ENCODE measurements at regions of chr10 and their contacts with region 1.

Region 1: DNA sequence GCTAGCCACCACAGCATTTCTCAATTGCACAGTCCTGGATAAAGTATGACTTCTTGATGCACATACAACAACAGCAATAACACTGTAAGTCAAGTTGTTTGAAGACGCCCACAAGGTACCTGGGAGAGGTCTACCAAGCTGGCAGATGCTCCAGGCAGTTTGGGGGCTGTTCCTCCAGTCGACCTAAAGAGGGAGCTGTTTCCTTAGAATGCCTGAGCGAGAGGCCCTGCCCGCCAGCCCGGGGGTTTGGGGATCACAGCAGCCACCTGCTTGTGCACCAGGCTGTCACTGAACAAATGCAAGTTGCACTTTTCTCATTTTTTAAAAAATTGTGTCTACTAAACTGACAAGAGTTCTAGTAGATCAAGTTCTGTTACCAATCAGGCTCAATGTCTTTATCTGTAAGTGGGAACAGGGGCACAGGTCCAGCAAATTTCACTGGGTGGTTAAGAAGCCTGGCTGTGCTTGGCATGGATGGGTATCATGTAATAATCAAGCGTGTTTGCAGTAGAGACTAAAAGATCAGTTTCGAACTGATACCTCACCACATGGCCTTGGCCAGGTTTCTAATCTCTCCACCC is 193.8 kb upstream of the ADO start:
- DNase-seq: peak; percentile 87
- ATAC-seq: peak; percentile 97
- H3K4me3 ChIP-seq: no peak overlapping the region
- H3K4me3 Mint-ChIP-seq: no peak overlapping the region
- H3K27ac ChIP-seq: no peak overlapping the region
- H3K27ac Mint-ChIP-seq: no peak overlapping the region
- H3K4me1 ChIP-seq: peaks cover 5% of the 10 kb centered on the region in 2 donors
- H3K4me1 Mint-ChIP-seq: peaks cover 12% of the 10 kb centered on the region
- H3K27me3 ChIP-seq: no peaks in the 10 kb centered on the region
- H3K27me3 Mint-ChIP-seq: no peaks in the 10 kb centered on the region
- CTCF ChIP-seq: peak; percentile 86

Region 2: DNA sequence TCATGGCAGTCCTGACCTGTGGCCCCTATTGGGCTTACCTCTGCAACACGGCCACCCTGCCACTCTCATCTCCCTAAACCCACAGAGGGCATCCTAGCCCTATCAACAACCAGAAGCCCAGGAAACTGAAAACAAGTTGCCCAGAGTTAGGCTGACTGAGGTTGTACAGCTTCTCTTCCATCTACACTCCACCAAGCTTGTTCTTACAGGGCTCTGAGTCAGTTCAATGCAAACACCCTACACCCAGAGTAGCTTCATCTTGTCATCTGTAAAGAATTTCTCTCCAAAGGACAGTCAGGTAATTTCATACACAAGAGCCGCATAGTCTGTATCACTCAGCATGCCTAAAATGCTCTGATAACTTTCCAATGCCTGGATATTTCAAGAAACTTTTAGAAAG is 533.8 kb before region 1 on chr10:
- CTCF ChIA-PET with region 1: no interaction called
- POLR2A ChIA-PET with region 1: no interaction called
- intact Hi-C with region 1: no loop called
- DNase-seq: no peak
- ATAC-seq: no peak
- H3K4me3 ChIP-seq: no peak overlapping the region
- H3K4me3 Mint-ChIP-seq: no peak overlapping the region
- H3K27ac ChIP-seq: peak overlapping the region; percentile 46 to 49
- H3K27ac Mint-ChIP-seq: peak overlapping the region; percentile 22
- H3K4me1 ChIP-seq: peaks cover 51 to 52% of the 10 kb centered on the region in 2 donors
- H3K4me1 Mint-ChIP-seq: peaks cover 81% of the 10 kb centered on the region
- H3K27me3 ChIP-seq: no peaks in the 10 kb centered on the region
- H3K27me3 Mint-ChIP-seq: no peaks in the 10 kb centered on the region
- CTCF ChIP-seq: no peak

Region 3: GRCh38 chr10:62512732-62513475 is 97.8 kb before region 1 on chr10:
- CTCF ChIA-PET with region 1: no interaction called
- POLR2A ChIA-PET with region 1: no interaction called
- intact Hi-C with region 1: no loop called
- DNase-seq: no peak
- ATAC-seq: no peak
- H3K4me3 ChIP-seq: no peak overlapping the region
- H3K4me3 Mint-ChIP-seq: no peak overlapping the region
- H3K27ac ChIP-seq: no peak overlapping the region
- H3K27ac Mint-ChIP-seq: no peak overlapping the region
- H3K4me1 ChIP-seq: no peaks in the 10 kb centered on the region
- H3K4me1 Mint-ChIP-seq: peaks cover 9% of the 10 kb centered on the region
- H3K27me3 ChIP-seq: no peaks in the 10 kb centered on the region
- H3K27me3 Mint-ChIP-seq: peaks cover 3% of the 10 kb centered on the region
- CTCF ChIP-seq: no peak

Region 4: GRCh38 chr10:62632071-62632809 is 21.5 kb after region 1 on chr10:
- CTCF ChIA-PET with region 1: interaction called, 13 read pairs
- POLR2A ChIA-PET with region 1: no interaction called
- intact Hi-C with region 1: loop called (anchors 2 kb)
- DNase-seq: peak; percentile 84
- ATAC-seq: peak; percentile 81
- H3K4me3 ChIP-seq: peak overlapping the region in 4 of 5 experiments; percentile 31 to 56 (median 40)
- H3K4me3 Mint-ChIP-seq: peak overlapping the region; percentile 90
- H3K27ac ChIP-seq: peak overlapping the region; percentile 94 to 95
- H3K27ac Mint-ChIP-seq: peak overlapping the region; percentile 99
- H3K4me1 ChIP-seq: peaks cover 54 to 59% of the 10 kb centered on the region in 2 donors
- H3K4me1 Mint-ChIP-seq: peaks cover 54% of the 10 kb centered on the region
- H3K27me3 ChIP-seq: no peaks in the 10 kb centered on the region
- H3K27me3 Mint-ChIP-seq: no peaks in the 10 kb centered on the region
- CTCF ChIP-seq: no peak

Region 5: DNA sequence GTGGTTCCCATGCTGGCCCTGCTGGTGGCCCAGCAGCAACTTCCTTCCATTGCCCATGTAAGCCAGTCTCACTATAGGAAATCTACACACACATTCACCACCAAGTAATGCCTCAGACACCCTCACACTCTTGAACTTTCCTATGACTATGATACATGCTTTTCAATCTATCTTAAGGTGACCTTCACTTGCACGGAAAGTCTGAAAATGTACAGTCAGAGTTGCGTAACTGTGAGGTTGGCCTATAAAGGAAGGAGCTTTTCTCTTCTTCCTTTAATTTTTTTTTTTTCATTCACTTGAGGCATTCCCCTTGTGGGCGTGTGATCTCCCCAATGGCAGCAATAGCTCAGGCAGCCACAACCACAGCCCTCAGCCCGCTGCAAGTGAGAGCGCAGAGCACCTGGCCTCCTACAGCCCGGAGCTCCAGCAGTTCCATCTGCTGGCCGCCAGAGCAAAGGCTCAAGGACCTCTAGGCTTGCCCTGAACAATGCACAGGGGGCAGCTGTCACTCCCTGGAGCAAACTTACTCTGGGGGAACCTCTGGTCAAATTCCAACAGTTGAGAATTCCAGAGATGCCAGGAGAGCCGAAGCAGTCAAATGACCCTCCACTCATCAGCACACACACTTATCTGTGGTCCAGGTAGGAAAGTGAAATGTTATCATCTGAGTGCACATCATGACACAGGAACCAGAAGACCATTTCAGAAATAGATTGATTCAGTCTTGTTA is 70.6 kb after region 1 on chr10:
- CTCF ChIA-PET with region 1: interaction called, 31 read pairs
- POLR2A ChIA-PET with region 1: no interaction called
- intact Hi-C with region 1: loop called (anchors 1 kb)
- DNase-seq: peak; percentile 82
- ATAC-seq: peak; percentile 97
- H3K4me3 ChIP-seq: no peak overlapping the region
- H3K4me3 Mint-ChIP-seq: peak overlapping the region; percentile 21
- H3K27ac ChIP-seq: no peak overlapping the region
- H3K27ac Mint-ChIP-seq: peak overlapping the region; percentile 51
- H3K4me1 ChIP-seq: peaks cover 14 to 17% of the 10 kb centered on the region in 2 donors
- H3K4me1 Mint-ChIP-seq: peaks cover 16% of the 10 kb centered on the region
- H3K27me3 ChIP-seq: no peaks in the 10 kb centered on the region
- H3K27me3 Mint-ChIP-seq: peaks cover 4% of the 10 kb centered on the region
- CTCF ChIP-seq: peak; percentile 53

Region 6: DNA sequence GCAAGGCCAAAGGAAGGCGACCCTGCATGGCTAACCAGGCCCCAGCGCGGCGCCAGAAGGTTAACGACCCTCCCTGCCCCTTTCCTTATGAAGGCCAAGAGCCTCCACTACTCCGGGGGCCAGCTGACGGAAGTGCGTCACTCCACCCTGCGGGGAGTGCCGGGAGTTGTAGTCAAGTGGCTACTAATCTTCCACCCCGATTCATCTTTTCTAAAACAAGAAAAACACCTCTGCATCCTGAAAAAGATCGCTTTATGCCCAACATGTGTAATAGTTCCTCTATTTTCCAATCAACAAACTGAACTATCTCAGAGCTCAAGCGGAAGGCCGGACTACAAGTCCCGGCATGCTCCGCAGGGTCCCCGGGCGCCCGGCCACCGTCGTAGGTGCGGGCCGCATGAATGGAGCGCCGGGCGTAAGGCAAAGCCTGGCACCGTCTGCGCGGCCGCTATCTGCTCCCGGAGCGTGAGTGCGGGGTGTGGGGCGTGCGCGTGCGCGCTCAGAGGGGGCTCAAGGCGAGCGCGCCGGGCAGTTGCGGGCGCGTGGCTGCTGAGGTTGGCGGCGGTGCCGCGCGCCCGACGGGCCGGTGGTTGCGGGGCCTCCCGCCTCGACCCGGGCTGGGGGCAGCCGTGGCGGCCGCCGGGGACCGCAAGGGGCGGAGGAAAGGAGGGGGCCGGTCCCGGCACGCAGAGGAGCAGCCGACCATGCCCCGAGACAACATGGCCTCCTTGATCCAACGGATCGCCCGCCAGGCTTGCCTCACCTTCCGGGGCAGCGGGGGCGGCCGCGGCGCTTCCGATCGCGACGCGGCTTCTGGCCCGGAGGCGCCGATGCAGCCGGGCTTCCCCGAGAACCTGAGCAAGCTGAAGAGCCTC is 193.9 kb after region 1 on chr10 and contains the start of gene ADO:
- CTCF ChIA-PET with region 1: interaction called, 10 read pairs
- POLR2A ChIA-PET with region 1: no interaction called
- intact Hi-C with region 1: no loop called
- DNase-seq: peak; percentile 92
- ATAC-seq: peak; percentile 87
- H3K4me3 ChIP-seq: peak within 1 kb of the TSS; percentile 79 to 99 (median 92)
- H3K4me3 Mint-ChIP-seq: peak within 1 kb of the TSS; percentile 98
- H3K27ac ChIP-seq: peak within 1 kb of the TSS; percentile 96 to 98
- H3K27ac Mint-ChIP-seq: peak within 1 kb of the TSS; percentile 99
- H3K4me1 ChIP-seq: peaks cover 26 to 29% of the 10 kb centered on the region in 2 donors
- H3K4me1 Mint-ChIP-seq: peaks cover 44% of the 10 kb centered on the region
- H3K27me3 ChIP-seq: no peaks in the 10 kb centered on the region
- H3K27me3 Mint-ChIP-seq: no peaks in the 10 kb centered on the region
- CTCF ChIP-seq: no peak
- total RNA-seq, gene ADO: 18.4 and 19.1 TPM in 2 replicates

Region 7: DNA sequence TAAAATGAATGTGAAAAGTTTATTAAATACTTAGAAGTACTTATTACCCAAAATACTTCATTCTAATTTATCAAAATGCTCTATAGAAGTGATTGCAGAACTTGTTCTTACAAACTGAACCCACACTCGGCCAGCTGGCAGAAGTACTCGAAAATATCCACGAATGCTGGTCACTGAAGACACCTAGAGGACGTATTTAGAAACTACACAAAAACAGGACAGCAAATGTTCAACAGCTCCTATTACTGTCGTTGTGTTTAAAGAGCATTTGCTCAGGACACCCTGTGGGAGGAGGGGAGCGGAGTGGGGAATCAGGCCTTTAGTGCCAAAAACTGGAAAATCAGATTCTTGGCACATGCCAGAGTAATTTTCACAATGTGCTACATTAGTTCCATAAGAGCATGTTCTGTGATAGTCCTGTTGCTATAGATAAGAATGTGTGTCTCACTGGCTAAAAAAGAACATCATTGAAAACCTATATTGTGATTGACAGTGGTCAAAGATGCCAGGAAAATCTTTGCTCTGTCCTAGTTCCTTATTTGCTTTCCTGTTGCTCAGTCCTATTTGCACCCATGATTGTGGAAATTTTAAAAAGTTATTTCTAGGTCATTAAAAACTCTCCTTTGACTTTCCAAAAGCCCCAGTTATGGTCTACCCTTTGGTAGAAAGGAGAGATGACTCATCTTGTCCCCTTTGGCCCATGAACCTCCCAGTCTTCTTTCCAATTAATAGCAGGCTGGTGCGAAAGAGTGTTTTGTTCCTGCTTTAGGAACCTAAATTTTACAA is 473.4 kb after region 1 on chr10:
- CTCF ChIA-PET with region 1: interaction called, 35 read pairs
- POLR2A ChIA-PET with region 1: no interaction called
- intact Hi-C with region 1: loop called (anchors 1 kb)
- DNase-seq: peak; percentile 75
- ATAC-seq: peak; percentile 86
- H3K4me3 ChIP-seq: no peak overlapping the region
- H3K4me3 Mint-ChIP-seq: no peak overlapping the region
- H3K27ac ChIP-seq: no peak overlapping the region
- H3K27ac Mint-ChIP-seq: no peak overlapping the region
- H3K4me1 ChIP-seq: no peaks in the 10 kb centered on the region
- H3K4me1 Mint-ChIP-seq: no peaks in the 10 kb centered on the region
- H3K27me3 ChIP-seq: no peaks in the 10 kb centered on the region
- H3K27me3 Mint-ChIP-seq: peaks cover 10% of the 10 kb centered on the region
- CTCF ChIP-seq: peak; percentile 82

Measured in B cell (primary cell).